Natural killer cell (primary cell): ENCODE measurements at regions of chr13 and their contacts with region 1.

Region 1: DNA sequence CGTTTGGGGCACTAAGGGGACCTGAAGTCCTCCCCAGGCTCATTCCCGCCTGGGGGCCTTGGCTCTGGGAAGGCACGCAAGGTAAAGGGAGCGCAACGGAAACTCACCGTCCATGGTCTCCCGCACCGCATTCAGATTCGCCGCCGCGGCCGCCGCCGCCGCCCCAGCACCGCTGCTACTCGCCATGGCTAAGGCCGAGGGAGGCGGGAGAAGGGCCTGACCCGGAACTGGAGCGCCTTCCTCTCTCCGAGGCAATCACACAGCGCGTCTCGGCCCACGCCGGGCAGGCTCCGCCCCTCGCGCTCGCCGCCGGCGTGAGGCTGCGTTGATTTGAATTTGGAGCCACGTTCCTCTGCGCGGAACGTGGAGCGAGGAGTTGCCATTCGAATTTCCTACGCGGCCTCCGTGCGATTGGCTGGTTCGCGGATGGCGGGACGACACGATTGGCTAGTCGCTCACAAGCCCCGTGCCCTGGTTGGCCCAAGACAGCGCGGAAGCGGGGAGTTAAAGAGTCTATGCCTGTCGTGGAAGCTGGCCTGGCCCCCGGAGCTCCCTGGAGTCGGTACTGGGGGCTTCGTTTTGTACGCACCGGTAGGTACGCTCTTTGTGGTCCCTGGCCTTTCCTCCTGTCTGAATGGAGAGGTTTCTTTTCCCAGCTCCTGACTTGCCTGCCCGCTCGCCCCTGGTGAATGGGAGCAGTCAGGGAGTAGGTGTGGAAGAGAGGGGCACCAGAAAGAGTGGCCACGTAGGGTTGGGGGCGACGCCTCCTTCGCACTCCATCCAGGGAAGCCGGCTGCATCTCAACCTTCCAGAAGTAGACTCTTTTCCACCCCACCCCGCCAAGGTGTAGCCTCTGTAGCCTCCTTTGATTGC is at the starts of genes BORA and MZT1:
- DNase-seq: peak; percentile 94 to 98
- ATAC-seq: peak; percentile 91 to 98 (median 92)
- H3K4me3 ChIP-seq: peak within 1 kb of the TSS; percentile 94
- H3K4me3 Mint-ChIP-seq: peak within 1 kb of the TSS; percentile 96
- H3K27ac ChIP-seq: peak within 1 kb of the TSS; percentile 73
- H3K27ac Mint-ChIP-seq: peak within 1 kb of the TSS; percentile 86 to 89
- H3K4me1 ChIP-seq: peaks cover 14% of the 10 kb centered on the region
- H3K4me1 Mint-ChIP-seq: peaks cover 47 to 50% of the 10 kb centered on the region in 2 donors
- H3K27me3 ChIP-seq: no peaks in the 10 kb centered on the region
- H3K27me3 Mint-ChIP-seq: no peaks in the 10 kb centered on the region
- CTCF ChIP-seq: no peak
- total RNA-seq, gene BORA: 4.9 to 7.4 (median 5.5) TPM
- total RNA-seq, gene MZT1: 5.7 to 7.4 (median 5.8) TPM

Region 2: GRCh38 chr13:71290963-71291841 is 1436.5 kb before region 1 on chr13:
- intact Hi-C with region 1: loop called (anchors 2 kb)
- DNase-seq: peak; percentile 39 to 78
- ATAC-seq: peak; percentile 74 to 77 (median 76)
- H3K4me3 ChIP-seq: peak overlapping the region; percentile 58
- H3K4me3 Mint-ChIP-seq: peak overlapping the region; percentile 89
- H3K27ac ChIP-seq: peak overlapping the region; percentile 88
- H3K27ac Mint-ChIP-seq: peak overlapping the region; percentile 94 to 97
- H3K4me1 ChIP-seq: peaks cover 4% of the 10 kb centered on the region
- H3K4me1 Mint-ChIP-seq: peaks cover 15 to 24% of the 10 kb centered on the region in 2 donors
- H3K27me3 ChIP-seq: no peaks in the 10 kb centered on the region
- H3K27me3 Mint-ChIP-seq: no peaks in the 10 kb centered on the region
- CTCF ChIP-seq: no peak

Region 3: DNA sequence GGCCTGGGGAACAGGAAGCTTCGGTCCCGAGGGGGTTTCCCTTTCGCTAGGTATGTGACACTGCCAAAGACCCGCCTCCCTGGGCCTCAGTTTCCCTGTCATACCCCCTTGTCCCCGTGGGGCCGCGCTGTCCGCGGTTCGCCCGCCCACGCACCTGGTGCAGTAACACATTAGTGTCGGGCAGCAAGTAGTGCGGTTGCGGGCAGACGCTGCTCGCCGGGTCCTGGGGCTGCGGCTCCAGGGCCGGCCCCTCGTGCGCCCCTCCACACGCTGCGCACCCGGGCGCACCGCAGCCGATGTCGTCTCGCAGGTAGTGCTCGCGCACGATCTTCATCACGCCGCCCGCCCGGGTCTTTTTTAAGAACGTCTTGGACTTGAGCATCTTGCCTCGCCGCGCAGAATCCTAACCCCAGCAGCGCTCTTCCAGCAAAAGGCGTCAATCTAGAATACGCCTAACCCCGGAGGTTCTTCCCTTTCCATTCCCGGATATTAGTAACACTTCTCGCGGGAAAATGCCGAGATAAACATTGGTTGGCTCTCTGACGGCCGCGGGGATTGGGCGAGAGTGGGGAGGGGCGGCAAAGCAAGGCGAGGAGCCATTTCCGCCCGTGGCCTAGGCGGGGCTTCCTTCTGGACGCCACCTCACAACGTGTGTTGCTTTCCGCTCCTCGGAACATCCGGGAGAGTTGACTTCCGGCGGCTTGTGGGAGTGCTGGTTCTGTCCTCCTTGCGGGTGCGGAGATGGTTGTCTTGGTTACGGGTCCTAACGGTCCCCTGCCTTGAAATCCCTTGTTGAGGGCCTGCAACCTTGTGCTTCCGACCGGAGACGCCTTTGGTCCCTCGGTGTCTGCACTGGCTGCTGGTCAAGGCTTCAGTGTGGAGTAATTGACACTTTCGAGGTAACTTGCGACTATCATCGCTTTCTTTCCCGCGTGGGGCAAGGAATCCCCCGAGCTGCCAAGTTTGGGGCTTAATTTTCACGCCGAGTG is 54.1 kb after region 1 on chr13 and contains the starts of genes DIS3 and PIBF1:
- intact Hi-C with region 1: loop called (anchors 1 kb)
- DNase-seq: peak; percentile 89 to 98
- ATAC-seq: peak; percentile 96 to 100 (median 96)
- H3K4me3 ChIP-seq: peak within 1 kb of the TSS; percentile 91
- H3K4me3 Mint-ChIP-seq: peak within 1 kb of the TSS; percentile 100
- H3K27ac ChIP-seq: peak within 1 kb of the TSS; percentile 91
- H3K27ac Mint-ChIP-seq: peak within 1 kb of the TSS; percentile 96 to 98
- H3K4me1 ChIP-seq: peaks cover 16% of the 10 kb centered on the region
- H3K4me1 Mint-ChIP-seq: peaks cover 51 to 65% of the 10 kb centered on the region in 2 donors
- H3K27me3 ChIP-seq: no peaks in the 10 kb centered on the region
- H3K27me3 Mint-ChIP-seq: no peaks in the 10 kb centered on the region
- CTCF ChIP-seq: no peak
- total RNA-seq, gene DIS3: 26.9 to 35.2 (median 33.6) TPM
- total RNA-seq, gene PIBF1: 21.9 to 37.8 (median 27.8) TPM

Region 4: GRCh38 chr13:73025217-73026012 is 297.8 kb after region 1 on chr13:
- intact Hi-C with region 1: no loop called
- DNase-seq: no peak
- ATAC-seq: no peak
- H3K4me3 ChIP-seq: no peak overlapping the region
- H3K4me3 Mint-ChIP-seq: no peak overlapping the region
- H3K27ac ChIP-seq: no peak overlapping the region
- H3K27ac Mint-ChIP-seq: no peak overlapping the region
- H3K4me1 ChIP-seq: no peaks in the 10 kb centered on the region
- H3K4me1 Mint-ChIP-seq: no peaks in the 10 kb centered on the region
- H3K27me3 ChIP-seq: no peaks in the 10 kb centered on the region
- H3K27me3 Mint-ChIP-seq: no peaks in the 10 kb centered on the region
- CTCF ChIP-seq: no peak